ENCODE measurements at regions of chr4 and their contacts with region 1.

Region 1: GRCh38 chr4:70734168-70734954 is 12.6 kb downstream of the RUFY3 start:
- DNase-seq: peak; percentile 41
- H3K4me3 Mint-ChIP-seq: peak overlapping the region; percentile 74
- H3K27ac Mint-ChIP-seq: peak overlapping the region; percentile 79
- H3K4me1 Mint-ChIP-seq: peaks cover 40% of the 10 kb centered on the region
- H3K27me3 Mint-ChIP-seq: no peaks in the 10 kb centered on the region

Region 2: GRCh38 chr4:70629469-70630090 is 104.8 kb before region 1 on chr4:
- intact Hi-C with region 1: loop called (anchors 10 kb)
- DNase-seq: no peak
- H3K4me3 Mint-ChIP-seq: no peak overlapping the region
- H3K27ac Mint-ChIP-seq: no peak overlapping the region
- H3K4me1 Mint-ChIP-seq: no peaks in the 10 kb centered on the region
- H3K27me3 Mint-ChIP-seq: peaks cover 13% of the 10 kb centered on the region

Region 3: DNA sequence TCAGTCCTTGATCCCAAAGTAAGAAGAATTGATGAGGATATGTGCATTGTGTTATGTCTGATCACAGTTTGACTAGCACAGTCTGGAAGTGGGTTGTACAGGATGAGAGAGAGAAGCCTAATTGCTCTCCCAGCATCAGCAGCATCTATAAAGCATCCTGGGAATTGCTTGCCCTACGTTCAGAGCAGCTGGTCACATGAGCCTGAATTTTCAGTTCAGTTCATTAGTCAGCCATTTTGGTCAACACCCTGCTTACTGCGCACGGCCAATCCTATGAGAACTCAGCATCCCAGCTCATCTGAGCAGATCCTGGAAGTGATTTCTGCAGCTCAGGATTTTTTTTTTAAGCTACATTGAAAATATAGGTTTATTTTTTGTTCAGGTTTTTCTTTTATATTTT is 12.6 kb before region 1 on chr4 and contains the start of gene RUFY3:
- intact Hi-C with region 1: no loop called
- DNase-seq: no peak
- H3K4me3 Mint-ChIP-seq: no peak within 1 kb of the TSS
- H3K27ac Mint-ChIP-seq: no peak within 1 kb of the TSS
- H3K4me1 Mint-ChIP-seq: peaks cover 21% of the 10 kb centered on the region
- H3K27me3 Mint-ChIP-seq: no peaks in the 10 kb centered on the region
- total RNA-seq, gene RUFY3: 20.5 and 22.3 TPM in 2 replicates

Region 4: DNA sequence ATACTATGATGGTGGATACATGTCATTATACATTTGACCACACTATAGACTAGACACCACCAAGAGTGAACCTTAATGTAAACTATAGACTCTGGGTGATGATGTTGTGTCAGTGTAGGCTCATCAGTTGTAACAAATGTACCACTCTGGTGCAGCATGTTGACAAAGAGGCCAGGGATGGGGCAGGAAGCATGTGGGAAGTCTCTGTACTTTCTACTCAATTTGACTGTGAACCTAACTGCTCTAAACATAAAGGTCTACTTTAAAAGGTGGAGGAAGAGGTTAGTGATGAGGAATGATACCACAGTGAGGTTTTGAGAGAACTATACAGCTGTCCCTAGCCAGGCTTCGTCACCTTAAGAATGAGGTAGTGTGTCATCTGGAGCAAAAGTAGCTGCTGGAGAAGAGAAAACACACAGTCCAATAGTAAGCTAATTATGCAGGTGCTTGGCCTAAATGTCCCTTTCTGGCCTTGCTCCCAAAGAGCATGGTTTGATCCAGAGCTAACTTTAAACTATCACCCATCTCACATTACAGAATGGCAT is 67.0 kb after region 1 on chr4:
- intact Hi-C with region 1: loop called (anchors 2 kb)
- DNase-seq: no peak
- H3K4me3 Mint-ChIP-seq: no peak overlapping the region
- H3K27ac Mint-ChIP-seq: peak overlapping the region; percentile 59
- H3K4me1 Mint-ChIP-seq: peaks cover 20% of the 10 kb centered on the region
- H3K27me3 Mint-ChIP-seq: no peaks in the 10 kb centered on the region